ENCODE measurements at regions of chr7 and their contacts with region 1.

Region 1: DNA sequence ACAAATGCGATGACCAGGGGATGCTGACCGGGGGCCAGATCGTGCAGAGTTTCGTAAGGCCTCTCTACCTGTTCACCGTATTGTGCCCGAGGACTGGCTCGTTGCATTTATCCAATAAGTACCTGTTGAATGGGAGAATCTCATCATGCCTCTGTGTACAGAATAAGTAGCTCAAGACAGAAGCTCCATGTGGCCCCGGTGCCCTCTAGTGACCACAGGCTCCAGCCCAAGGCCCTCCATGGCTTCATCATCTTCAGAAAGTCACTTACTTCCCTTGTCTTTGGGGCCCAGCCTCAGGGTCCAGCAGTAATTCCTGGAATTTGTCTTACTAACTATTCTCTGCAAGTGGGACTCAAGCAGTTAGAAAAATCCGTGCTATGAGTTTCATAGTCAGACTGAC is 151.0 kb downstream of the CHN2 start:
- DNase-seq: peak; percentile 38 to 41
- ATAC-seq: peak in 7 of 8 donors; percentile 56 to 72 (median 67)
- H3K4me3 ChIP-seq: no peak overlapping the region
- H3K27ac ChIP-seq: no peak overlapping the region
- H3K4me1 ChIP-seq: peaks cover 0 to 25% (median 0%) of the 10 kb centered on the region in 9 donors
- H3K27me3 ChIP-seq: no peaks in the 10 kb centered on the region
- CTCF ChIP-seq: peak; percentile 5 to 71 (median 60)

Region 2: GRCh38 chr7:29113384-29114103 is 232.1 kb before region 1 on chr7:
- intact Hi-C with region 1: loop called in 1 of 10 experiments (anchors 10 kb)
- DNase-seq: no peak
- ATAC-seq: peak in 4 of 8 donors; percentile 24 to 59 (median 34)
- H3K4me3 ChIP-seq: no peak overlapping the region
- H3K27ac ChIP-seq: no peak overlapping the region
- H3K4me1 ChIP-seq: peaks cover 0 to 57% (median 15%) of the 10 kb centered on the region in 9 donors
- H3K27me3 ChIP-seq: peaks cover 0 to 3% (median 0%) of the 10 kb centered on the region in 7 donors
- CTCF ChIP-seq: peak in 7 of 9 donors; percentile 7 to 49 (median 37)

Region 3: DNA sequence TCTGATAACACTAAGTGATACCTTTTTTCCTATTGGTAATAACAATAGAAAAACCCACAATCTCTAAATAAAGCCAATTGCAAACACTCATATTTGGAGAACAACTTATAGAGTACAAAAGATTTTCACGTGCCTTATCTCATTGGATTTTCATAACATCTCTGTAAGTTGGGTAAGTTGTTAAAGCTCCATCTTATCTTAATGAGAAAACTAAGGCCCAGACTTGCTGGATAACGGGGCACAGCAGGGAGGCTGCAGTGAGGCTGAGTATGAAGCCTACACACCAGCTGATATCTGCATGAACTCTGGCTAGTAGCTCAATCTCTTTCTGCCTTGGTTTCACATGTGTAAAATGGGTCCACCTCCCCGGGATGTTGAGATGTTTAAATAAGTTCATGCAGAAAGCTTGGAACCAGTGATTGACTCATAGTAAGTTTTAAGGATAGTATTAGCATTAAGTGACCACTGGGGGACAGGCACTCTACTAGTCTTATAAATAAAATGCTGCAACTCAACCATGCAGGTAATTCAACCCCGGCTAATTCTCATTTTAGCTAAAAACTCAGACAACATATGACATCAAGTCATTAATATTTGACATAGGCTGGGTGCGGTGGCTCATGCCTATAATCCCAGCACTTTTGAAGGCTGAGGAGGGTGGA is 225.9 kb before region 1 on chr7:
- intact Hi-C with region 1: loop called in 2 of 10 experiments (anchors 10 kb)
- DNase-seq: no peak
- ATAC-seq: no peak
- H3K4me3 ChIP-seq: no peak overlapping the region
- H3K27ac ChIP-seq: no peak overlapping the region
- H3K4me1 ChIP-seq: peaks cover 0 to 42% (median 28%) of the 10 kb centered on the region in 9 donors
- H3K27me3 ChIP-seq: no peaks in the 10 kb centered on the region
- CTCF ChIP-seq: peak in 1 of 9 donors; percentile 5

Measured in heart right ventricle (tissue), 16 donors.